K562 (cell line): ENCODE measurements at regions of chr10 and their contacts with region 1.

Region 1: GRCh38 chr10:61896854-61897661 is 4.4 kb upstream of the ARID5B start:
- DNase-seq: peak; percentile 88 to 89 (median 88)
- ATAC-seq: peak; percentile 88
- H3K4me3 ChIP-seq: no peak overlapping the region
- H3K27ac ChIP-seq: no peak overlapping the region
- H3K4me1 ChIP-seq: peaks cover 6 to 24% of the 10 kb centered on the region in 2 experiments
- H3K27me3 ChIP-seq: no peaks in the 10 kb centered on the region
- CTCF ChIP-seq: peak; percentile 79 to 91 (median 80)
- EP300 ChIP-seq: no peak
- POLR2A ChIP-seq: no peak
- RAD21 ChIP-seq: peak; percentile 39 to 71

Region 2: DNA sequence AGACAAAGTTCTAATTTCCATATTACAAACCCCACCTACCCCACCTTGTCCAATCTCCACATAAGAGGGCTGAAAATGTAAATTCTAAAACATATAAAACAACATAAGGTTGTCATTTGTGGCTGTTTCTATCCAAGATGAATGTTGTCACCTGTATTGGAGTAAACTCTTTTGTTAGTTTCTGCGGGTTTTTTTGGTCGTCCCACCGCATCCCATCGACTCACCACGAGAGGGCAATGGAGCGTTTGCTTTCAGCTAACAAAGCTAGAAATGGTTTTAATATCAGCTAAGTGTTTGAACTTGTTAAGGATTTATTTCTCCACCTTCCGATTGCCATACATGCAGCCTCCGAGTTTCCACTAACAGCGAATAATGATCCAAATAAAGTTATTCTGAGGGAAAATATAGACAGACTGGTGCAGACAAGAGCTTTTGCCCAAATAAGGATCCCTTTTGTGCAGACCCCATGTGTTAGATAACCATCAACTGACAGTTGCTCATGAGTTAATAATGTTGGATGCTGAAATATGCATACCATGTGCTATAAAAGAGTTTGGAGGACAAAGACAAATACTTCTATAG is 141.6 kb after region 1 on chr10:
- CTCF ChIA-PET with region 1: interaction called, 3 read pairs
- POLR2A ChIA-PET with region 1: no interaction called
- in situ Hi-C with region 1: no loop called
- intact Hi-C with region 1: loop called (anchors 2 kb)
- DNase-seq: peak; percentile 56 to 79 (median 66)
- ATAC-seq: peak; percentile 86
- H3K4me3 ChIP-seq: no peak overlapping the region
- H3K27ac ChIP-seq: no peak overlapping the region
- H3K4me1 ChIP-seq: no peaks in the 10 kb centered on the region
- H3K27me3 ChIP-seq: peaks cover 3 to 9% of the 10 kb centered on the region in 2 experiments; a peak in 2 of 5 replicates
- CTCF ChIP-seq: peak; percentile 76 to 85 (median 78)
- EP300 ChIP-seq: no peak
- POLR2A ChIP-seq: no peak
- RAD21 ChIP-seq: peak; percentile 84 to 87